ENCODE measurements at regions of chr1 and their contacts with region 1.

Region 1: DNA sequence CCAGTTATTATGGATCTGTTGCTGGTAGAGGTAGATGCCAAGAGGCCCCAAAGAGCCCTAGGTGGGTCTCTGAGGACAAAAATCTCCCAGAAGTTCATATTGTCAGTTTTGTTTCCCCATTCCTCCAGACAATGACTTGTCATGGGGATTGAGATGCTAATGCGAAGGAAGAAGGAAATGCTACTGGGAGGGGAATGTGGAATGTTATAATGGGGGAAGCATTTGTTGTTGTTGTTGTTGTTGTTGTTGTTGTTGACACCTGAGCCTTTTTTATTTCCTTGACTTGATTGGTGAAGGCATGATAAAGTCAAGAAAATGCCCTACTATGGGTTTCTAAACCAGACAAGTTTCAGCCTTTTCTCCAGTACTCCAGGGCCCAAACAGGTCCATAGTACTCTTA is 108.9 kb downstream of the BEND5 start:
- DNase-seq: no peak
- H3K4me3 ChIP-seq: no peak overlapping the region
- H3K27ac ChIP-seq: no peak overlapping the region
- H3K4me1 ChIP-seq: no peaks in the 10 kb centered on the region
- H3K27me3 ChIP-seq: no peaks in the 10 kb centered on the region
- CTCF ChIP-seq: no peak
- POLR2A ChIP-seq: no peak

Region 2: GRCh38 chr1:48552420-48552819 is 115.4 kb before region 1 on chr1:
- intact Hi-C with region 1: no loop called
- DNase-seq: no peak
- H3K4me3 ChIP-seq: no peak overlapping the region
- H3K27ac ChIP-seq: no peak overlapping the region
- H3K4me1 ChIP-seq: no peaks in the 10 kb centered on the region
- H3K27me3 ChIP-seq: no peaks in the 10 kb centered on the region
- CTCF ChIP-seq: peak in 1 of 4 experiments; percentile 30
- POLR2A ChIP-seq: no peak

Region 3: GRCh38 chr1:48683839-48684238 is 16.1 kb after region 1 on chr1:
- intact Hi-C with region 1: loop called (anchors 1 kb)
- DNase-seq: no peak
- H3K4me3 ChIP-seq: no peak overlapping the region
- H3K27ac ChIP-seq: no peak overlapping the region
- H3K4me1 ChIP-seq: no peaks in the 10 kb centered on the region
- H3K27me3 ChIP-seq: no peaks in the 10 kb centered on the region
- CTCF ChIP-seq: no peak
- POLR2A ChIP-seq: no peak

Region 4: DNA sequence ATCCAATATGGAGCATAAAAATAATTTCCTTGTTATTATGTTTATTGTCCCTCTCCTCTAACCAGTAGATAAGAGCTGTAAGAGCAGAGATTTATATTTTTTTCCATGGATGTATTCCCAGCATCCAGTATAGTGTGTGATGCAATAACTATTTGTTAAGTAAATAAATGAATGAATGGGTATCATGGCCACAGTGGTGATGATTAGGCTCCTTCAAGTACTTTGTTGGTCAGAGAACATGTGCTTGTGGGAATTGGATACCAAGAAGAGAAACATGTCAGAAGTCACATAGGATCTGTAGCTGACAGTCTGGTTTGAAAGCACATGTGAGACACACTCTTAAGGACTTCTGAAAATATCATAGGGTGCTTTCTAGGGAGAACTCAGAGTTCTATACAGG is 767.5 kb after region 1 on chr1:
- intact Hi-C with region 1: no loop called
- DNase-seq: no peak
- H3K4me3 ChIP-seq: no peak overlapping the region
- H3K27ac ChIP-seq: no peak overlapping the region
- H3K4me1 ChIP-seq: no peaks in the 10 kb centered on the region
- H3K27me3 ChIP-seq: no peaks in the 10 kb centered on the region
- CTCF ChIP-seq: no peak
- POLR2A ChIP-seq: no peak

Measured in prostate gland (tissue), 2 donors.